Gastrocnemius medialis (tissue), 4 donors: ENCODE measurements at regions of chr21 and their contacts with region 1.

Region 1: GRCh38 chr21:42145569-42146272 is 73.2 kb upstream of the ABCG1 start:
- DNase-seq: peak; percentile 17 to 35
- ATAC-seq: peak; percentile 56 to 81
- H3K4me3 ChIP-seq: no peak overlapping the region
- H3K27ac ChIP-seq: no peak overlapping the region
- H3K4me1 ChIP-seq: no peaks in the 10 kb centered on the region
- H3K27me3 ChIP-seq: no peaks in the 10 kb centered on the region
- CTCF ChIP-seq: peak; percentile 86 to 95 (median 91)
- POLR2A ChIP-seq: no peak

Region 2: GRCh38 chr21:41715649-41716281 is 430.0 kb before region 1 on chr21:
- in situ Hi-C with region 1: no loop called
- intact Hi-C with region 1: no loop called
- DNase-seq: no peak
- ATAC-seq: no peak
- H3K4me3 ChIP-seq: no peak overlapping the region
- H3K27ac ChIP-seq: no peak overlapping the region
- H3K4me1 ChIP-seq: no peaks in the 10 kb centered on the region
- H3K27me3 ChIP-seq: peaks cover 4 to 5% (median 4%) of the 10 kb centered on the region in 3 donors
- CTCF ChIP-seq: no peak
- POLR2A ChIP-seq: no peak

Region 3: GRCh38 chr21:42276526-42277154 is 130.9 kb after region 1 on chr21:
- in situ Hi-C with region 1: loop called in 1 of 4 experiments (anchors 10 kb)
- intact Hi-C with region 1: no loop called
- DNase-seq: no peak
- ATAC-seq: no peak
- H3K4me3 ChIP-seq: no peak overlapping the region
- H3K27ac ChIP-seq: no peak overlapping the region
- H3K4me1 ChIP-seq: no peaks in the 10 kb centered on the region
- H3K27me3 ChIP-seq: no peaks in the 10 kb centered on the region
- CTCF ChIP-seq: no peak
- POLR2A ChIP-seq: no peak

Region 4: GRCh38 chr21:42449296-42449927 is 303.7 kb after region 1 on chr21:
- in situ Hi-C with region 1: loop called (anchors 5 to 25 kb)
- intact Hi-C with region 1: loop called (anchors 5 kb)
- DNase-seq: no peak
- ATAC-seq: no peak
- H3K4me3 ChIP-seq: no peak overlapping the region
- H3K27ac ChIP-seq: no peak overlapping the region
- H3K4me1 ChIP-seq: no peaks in the 10 kb centered on the region
- H3K27me3 ChIP-seq: peaks cover 0 to 6% (median 0%) of the 10 kb centered on the region in 3 donors
- CTCF ChIP-seq: no peak
- POLR2A ChIP-seq: no peak

Region 5: GRCh38 chr21:42456457-42456856 is 310.7 kb after region 1 on chr21:
- in situ Hi-C with region 1: loop called in 3 of 4 experiments (anchors 10 to 25 kb)
- intact Hi-C with region 1: loop called (anchors 5 kb)
- DNase-seq: no peak
- ATAC-seq: no peak
- H3K4me3 ChIP-seq: no peak overlapping the region
- H3K27ac ChIP-seq: no peak overlapping the region
- H3K4me1 ChIP-seq: no peaks in the 10 kb centered on the region
- H3K27me3 ChIP-seq: peaks cover 0 to 7% (median 0%) of the 10 kb centered on the region in 3 donors
- CTCF ChIP-seq: no peak
- POLR2A ChIP-seq: no peak

Region 6: GRCh38 chr21:42467140-42467983 is 321.6 kb after region 1 on chr21:
- in situ Hi-C with region 1: loop called in 2 of 4 experiments (anchors 25 kb)
- intact Hi-C with region 1: no loop called
- DNase-seq: peak in 1 of 2 donors; percentile 25
- ATAC-seq: peak; percentile 78 to 85
- H3K4me3 ChIP-seq: peak overlapping the region in 2 of 4 donors; percentile 14 to 42
- H3K27ac ChIP-seq: peak overlapping the region in 3 of 4 donors; percentile 19 to 49 (median 28)
- H3K4me1 ChIP-seq: peaks cover 9 to 12% of the 10 kb centered on the region in 2 donors
- H3K27me3 ChIP-seq: no peaks in the 10 kb centered on the region
- CTCF ChIP-seq: peak in 4 of 5 experiments; percentile 26 to 46 (median 32)
- POLR2A ChIP-seq: no peak